BJ (cell line): ENCODE measurements at regions of chr5 and their contacts with region 1.

Region 1: DNA sequence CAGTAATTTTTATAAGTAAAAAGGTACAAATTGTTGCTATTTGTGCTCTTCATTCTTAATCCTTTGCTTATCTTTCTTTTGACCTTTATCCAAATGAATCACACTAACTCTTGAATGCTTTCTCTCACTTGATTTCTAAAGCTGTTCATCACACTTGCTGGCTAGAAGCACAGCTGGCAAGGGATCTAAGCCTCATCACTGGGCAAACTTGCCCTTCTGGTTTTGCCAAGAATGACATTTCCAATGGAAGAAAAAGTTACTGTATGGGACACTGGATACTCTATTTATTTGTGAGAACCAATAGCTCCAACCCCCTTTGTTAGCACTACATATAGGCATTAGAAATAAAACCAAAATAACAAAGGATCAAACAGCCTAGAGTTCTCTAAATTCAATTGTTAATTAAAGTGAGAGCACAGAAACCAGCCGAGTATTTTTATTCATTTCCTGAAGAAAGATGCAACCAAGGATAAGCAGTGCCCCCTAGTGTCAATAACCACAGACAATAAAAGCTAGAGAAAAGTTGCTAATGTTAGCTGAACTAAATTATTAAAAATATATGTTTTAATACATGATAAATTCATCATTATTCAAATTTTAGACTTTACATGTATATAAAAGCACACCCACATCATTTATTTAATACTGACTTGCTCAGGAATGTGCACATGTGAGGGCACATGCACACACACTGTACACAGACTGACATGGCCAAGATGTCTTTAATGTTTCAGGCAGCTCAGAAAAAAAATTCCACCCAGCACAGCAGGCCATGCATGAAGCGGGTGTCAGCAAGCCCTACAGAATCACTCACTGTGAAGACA is 59.8 kb upstream of the POU5F2 start:
- DNase-seq: no peak
- H3K4me3 ChIP-seq: no peak overlapping the region
- H3K27me3 ChIP-seq: no peaks in the 10 kb centered on the region
- CTCF ChIP-seq: peak; percentile 58

Region 2: DNA sequence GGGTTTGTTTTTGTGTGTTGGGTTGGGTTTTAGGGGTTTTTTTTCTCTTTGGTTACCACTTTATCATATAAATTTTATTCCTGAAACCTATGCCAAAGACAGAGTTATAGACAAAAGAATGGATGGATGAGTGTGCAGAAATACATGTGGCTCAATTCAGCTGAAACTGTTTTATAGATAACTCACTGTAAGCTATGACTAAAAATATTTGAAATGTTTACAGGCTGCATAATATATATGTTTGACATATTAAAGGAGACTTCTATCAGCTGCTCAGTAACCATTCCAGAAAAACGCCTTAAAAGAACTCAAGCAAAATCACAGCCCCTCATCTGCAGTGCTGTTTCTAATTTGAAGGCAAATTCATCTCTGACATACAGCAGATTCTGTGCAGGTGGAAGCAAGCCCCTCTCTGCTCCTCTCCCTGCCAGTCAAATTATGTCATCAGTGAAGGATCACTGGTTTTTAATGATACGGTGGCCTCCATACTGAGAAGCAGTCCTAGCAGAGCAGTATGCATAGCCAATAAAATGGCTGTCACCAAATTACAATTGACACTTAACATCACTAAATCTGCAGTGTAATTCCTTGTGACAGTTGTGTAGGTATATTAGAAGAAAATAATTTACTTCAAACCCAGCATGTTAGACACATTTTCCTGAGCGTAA is 521.8 kb before region 1 on chr5:
- CTCF ChIA-PET with region 1: no interaction called
- POLR2A ChIA-PET with region 1: no interaction called
- DNase-seq: no peak
- H3K4me3 ChIP-seq: no peak overlapping the region
- H3K27me3 ChIP-seq: no peaks in the 10 kb centered on the region
- CTCF ChIP-seq: no peak

Region 3: DNA sequence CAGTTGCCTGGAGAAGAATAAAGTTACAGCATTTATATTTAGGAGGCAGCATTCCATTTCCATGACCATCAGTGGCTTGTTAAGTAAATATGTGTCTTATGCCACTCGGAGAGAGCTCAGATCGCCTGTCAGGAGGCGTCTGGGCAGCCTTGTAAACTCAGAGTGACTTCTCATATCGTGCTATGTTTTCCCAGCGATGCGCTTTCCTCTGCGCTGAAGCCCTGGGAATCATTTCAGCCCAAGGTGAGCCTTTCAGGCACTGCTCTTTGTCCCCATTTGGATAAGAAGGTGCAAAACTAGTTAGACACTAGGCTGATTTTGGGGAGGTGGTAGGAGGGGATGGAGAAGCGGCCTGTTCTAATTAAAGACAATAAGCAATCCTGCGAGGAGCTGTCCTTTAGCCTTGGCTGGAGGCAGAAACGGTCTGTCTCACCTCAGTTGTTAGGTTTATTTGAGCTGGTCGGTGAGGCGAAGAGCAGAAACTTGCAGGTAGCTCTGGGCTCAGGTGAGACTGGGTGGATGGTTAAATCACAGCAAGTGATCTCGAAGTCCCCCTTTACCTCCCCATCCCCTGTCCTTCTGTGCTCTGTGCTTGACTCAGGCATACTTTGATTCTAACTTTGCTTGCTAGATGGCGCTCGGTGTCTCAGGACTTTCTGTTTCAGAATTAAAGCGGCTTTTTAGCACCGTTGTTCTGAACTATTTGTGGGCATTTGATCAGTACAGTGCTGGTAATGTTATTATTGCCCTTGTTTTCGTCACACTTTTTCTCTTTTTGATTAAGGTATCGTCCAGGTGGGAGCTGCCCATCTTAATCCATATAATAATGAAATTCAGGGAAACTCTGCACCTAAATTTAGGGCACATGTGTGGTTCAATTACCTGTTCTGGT is 193.6 kb before region 1 on chr5:
- CTCF ChIA-PET with region 1: interaction called, 20 read pairs
- POLR2A ChIA-PET with region 1: no interaction called
- DNase-seq: no peak
- H3K4me3 ChIP-seq: no peak overlapping the region
- H3K27me3 ChIP-seq: peaks cover 28% of the 10 kb centered on the region
- CTCF ChIP-seq: peak; percentile 69

Region 4: DNA sequence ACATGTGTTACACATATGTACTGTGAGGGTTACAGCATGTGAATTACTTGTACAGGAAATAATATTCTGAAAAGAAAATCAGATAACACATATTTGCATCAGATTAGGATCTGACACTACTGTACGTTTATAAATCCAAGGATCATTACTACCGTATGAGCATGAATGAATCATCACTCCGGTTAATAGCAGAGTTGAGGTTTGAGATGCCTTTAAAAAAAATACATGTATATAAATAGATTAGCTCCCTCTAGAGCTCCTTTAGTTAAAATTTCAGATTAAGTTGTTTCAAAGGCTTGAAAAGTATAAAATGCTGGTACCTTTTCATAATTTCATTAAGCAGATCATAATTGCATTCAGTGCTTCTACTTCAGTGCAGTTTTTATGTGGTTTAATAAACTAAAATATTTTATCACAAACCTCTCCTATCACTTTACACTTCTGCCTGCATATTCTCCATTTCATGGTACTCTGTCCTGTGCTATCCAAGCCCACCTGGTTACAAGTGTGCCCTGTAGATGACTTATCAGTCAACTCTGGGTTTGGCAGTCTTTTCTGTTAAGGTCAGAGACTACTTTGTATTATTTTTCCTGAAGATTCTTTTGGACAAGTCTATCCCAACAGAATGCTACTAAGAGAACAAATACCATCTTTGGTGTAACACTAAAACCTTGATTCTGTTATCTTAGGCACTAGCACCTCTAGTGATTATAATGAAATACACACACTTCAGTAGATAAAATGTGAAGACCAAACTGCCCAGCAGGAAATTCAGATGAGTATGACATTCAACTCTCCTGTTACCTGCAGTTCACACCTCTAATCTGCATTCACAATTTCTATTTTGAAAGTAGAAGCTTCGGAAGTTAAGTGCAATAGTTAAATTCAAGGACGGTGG is 11.8 kb before region 1 on chr5:
- CTCF ChIA-PET with region 1: interaction called, 18 read pairs
- POLR2A ChIA-PET with region 1: no interaction called
- DNase-seq: peak; percentile 68
- H3K4me3 ChIP-seq: no peak overlapping the region
- H3K27me3 ChIP-seq: no peaks in the 10 kb centered on the region; the same call in 1 of the 2 replicates
- CTCF ChIP-seq: peak; percentile 20; the same call in 1 of the 2 replicates

Region 5: GRCh38 chr5:93870649-93871048 is 69.4 kb after region 1 on chr5:
- CTCF ChIA-PET with region 1: no interaction called
- POLR2A ChIA-PET with region 1: no interaction called
- DNase-seq: no peak
- H3K4me3 ChIP-seq: no peak overlapping the region
- H3K27me3 ChIP-seq: no peaks in the 10 kb centered on the region
- CTCF ChIP-seq: no peak